HepG2 (cell line): ENCODE measurements at regions of chr11 and their contacts with region 1.

Region 1: DNA sequence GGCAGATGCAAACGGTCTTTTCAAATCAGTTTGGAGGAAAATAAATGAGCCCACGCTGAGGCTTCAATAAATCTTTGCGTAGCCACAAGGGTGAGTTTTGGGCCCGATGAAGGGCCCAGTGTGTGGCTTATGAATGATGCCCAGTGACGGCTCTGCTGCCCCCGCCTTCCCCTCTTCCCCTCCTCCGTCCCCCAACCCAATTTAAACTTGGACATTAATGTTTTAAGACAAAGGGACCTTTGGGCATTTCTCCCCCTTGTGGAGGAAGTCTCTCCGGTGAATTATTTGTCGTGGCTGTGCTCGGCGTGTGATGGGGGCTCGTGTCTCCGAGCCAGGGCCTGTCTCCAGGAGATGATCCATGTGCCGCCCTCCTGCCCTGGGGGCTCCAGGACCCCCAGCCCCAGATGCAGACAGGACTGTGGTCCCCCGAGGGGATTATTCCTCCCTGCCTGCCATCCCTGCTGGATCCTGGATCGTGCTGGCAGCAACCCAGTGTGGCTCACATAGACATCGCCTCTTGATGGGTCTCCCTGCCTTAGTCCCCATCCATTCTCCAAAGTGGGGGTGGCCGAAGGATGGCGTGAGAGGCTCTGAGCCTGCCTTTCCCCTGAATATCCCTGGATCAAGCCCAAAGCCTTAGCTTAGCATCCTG is 56.3 kb downstream of the SMIM38 start:
- DNase-seq: no peak
- ATAC-seq: no peak
- H3K4me3 ChIP-seq: no peak overlapping the region
- H3K27ac ChIP-seq: no peak overlapping the region
- H3K4me1 ChIP-seq: peaks cover 16% of the 10 kb centered on the region
- H3K27me3 ChIP-seq: peaks cover 4 to 14% of the 10 kb centered on the region in 2 experiments
- CTCF ChIP-seq: peak; percentile 41
- EP300 ChIP-seq: no peak
- POLR2A ChIP-seq: no peak
- RAD21 ChIP-seq: no peak

Region 2: GRCh38 chr11:69115586-69116560 is 96.2 kb before region 1 on chr11:
- CTCF ChIA-PET with region 1: no interaction called
- POLR2A ChIA-PET with region 1: no interaction called
- in situ Hi-C with region 1: loop called (anchors 5 kb)
- intact Hi-C with region 1: no loop called
- DNase-seq: no peak
- ATAC-seq: no peak; the same call in 1 of the 3 replicates
- H3K4me3 ChIP-seq: no peak overlapping the region
- H3K27ac ChIP-seq: no peak overlapping the region
- H3K4me1 ChIP-seq: 0 out of 2 replicates have a peak, but pooled peaks cover 8% of the 10 kb centered on the region
- H3K27me3 ChIP-seq: peaks cover 4 to 50% of the 10 kb centered on the region in 2 experiments; a peak in 4 of 5 replicates
- CTCF ChIP-seq: no peak
- EP300 ChIP-seq: no peak
- POLR2A ChIP-seq: no peak
- RAD21 ChIP-seq: no peak

Region 3: GRCh38 chr11:69131644-69132300 is 80.3 kb before region 1 on chr11:
- CTCF ChIA-PET with region 1: interaction called, 4 read pairs
- POLR2A ChIA-PET with region 1: no interaction called
- in situ Hi-C with region 1: no loop called
- intact Hi-C with region 1: loop called (anchors 2 kb)
- DNase-seq: peak; percentile 80
- ATAC-seq: peak; percentile 96
- H3K4me3 ChIP-seq: no peak overlapping the region; a peak in 1 of 6 replicates
- H3K27ac ChIP-seq: no peak overlapping the region
- H3K4me1 ChIP-seq: peaks cover 6% of the 10 kb centered on the region; the same call in 1 of the 2 replicates
- H3K27me3 ChIP-seq: 0 out of 5 replicates have a peak, but pooled peaks cover 0 to 2% of the 10 kb centered on the region in 2 experiments
- CTCF ChIP-seq: peak; percentile 97
- EP300 ChIP-seq: peak in 1 of 2 experiments; percentile 24; a peak in 1 of 4 replicates
- POLR2A ChIP-seq: no peak
- RAD21 ChIP-seq: peak; percentile 82

Region 4: DNA sequence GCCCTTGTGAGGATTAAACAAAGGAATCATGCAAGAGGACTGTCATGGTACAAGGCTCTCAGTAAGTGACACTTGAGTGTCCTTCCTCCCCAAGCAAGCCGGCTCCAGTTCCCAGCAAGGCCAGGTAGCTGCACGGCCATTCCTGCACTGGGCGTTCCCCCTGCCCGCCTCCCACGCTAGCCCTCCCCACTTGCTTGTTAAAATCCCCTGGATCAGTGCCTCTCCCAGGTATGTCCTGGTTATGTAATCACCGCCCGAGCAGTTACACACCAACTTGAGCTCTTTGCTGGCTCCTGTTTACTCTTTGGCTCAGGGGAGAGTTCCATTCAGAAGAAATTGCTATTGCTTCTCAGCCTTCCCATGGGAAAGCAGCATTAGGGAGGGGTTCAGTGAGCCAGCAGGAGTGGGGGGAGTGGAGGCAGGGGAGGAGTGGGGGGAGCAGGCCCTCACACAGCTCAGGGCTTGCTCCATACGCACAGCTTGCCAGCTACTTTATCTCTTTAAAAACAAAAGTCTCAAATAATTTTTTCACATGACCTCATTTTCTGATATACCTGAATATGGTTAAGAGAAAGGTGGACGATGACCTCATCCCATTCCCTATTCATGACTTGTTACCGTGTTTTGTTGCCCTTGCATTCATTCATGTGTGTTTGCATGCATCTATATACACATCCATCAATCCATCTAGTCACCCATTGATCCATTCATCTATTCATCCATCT is 62.6 kb after region 1 on chr11:
- CTCF ChIA-PET with region 1: no interaction called
- POLR2A ChIA-PET with region 1: no interaction called
- in situ Hi-C with region 1: loop called (anchors 10 kb)
- intact Hi-C with region 1: no loop called
- DNase-seq: no peak
- ATAC-seq: no peak
- H3K4me3 ChIP-seq: no peak overlapping the region
- H3K27ac ChIP-seq: no peak overlapping the region
- H3K4me1 ChIP-seq: peaks cover 42% of the 10 kb centered on the region
- H3K27me3 ChIP-seq: peaks cover 5 to 20% of the 10 kb centered on the region in 2 experiments; a peak in 3 of 5 replicates
- CTCF ChIP-seq: no peak
- EP300 ChIP-seq: no peak
- POLR2A ChIP-seq: no peak
- RAD21 ChIP-seq: no peak

Region 5: DNA sequence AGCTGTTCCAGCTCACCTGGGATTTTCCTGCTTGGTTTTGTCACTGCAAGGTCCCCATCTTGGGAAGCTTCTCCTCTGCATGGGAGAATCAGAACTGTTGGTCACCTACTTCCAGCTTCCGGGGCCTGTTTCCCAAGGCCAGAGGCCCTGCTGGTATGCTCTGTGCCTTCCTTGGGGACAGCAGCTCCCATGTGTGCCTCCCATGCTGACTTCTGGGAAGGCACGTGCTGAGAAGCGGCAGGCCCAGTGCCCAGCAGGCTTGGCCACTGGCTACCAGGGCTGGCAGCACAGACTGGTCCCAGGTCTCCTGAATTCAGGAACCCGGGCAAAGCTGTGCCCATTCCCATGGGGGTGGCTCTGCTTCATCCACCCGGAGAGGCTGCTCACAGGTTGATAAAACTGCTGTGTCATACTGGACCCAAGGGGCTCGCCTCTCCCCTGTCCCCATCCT is 115.7 kb after region 1 on chr11:
- CTCF ChIA-PET with region 1: no interaction called
- POLR2A ChIA-PET with region 1: no interaction called
- in situ Hi-C with region 1: no loop called
- intact Hi-C with region 1: no loop called
- DNase-seq: no peak
- ATAC-seq: no peak
- H3K4me3 ChIP-seq: no peak overlapping the region
- H3K27ac ChIP-seq: no peak overlapping the region
- H3K4me1 ChIP-seq: no peaks in the 10 kb centered on the region
- H3K27me3 ChIP-seq: peaks cover 0 to 14% of the 10 kb centered on the region in 2 experiments; a peak in 2 of 5 replicates
- CTCF ChIP-seq: no peak
- EP300 ChIP-seq: no peak
- POLR2A ChIP-seq: no peak
- RAD21 ChIP-seq: no peak